Activated B cell treated with CpG ODN at 0.5 μM for 24 hours (primary cell): ENCODE measurements at regions of chr15 and their contacts with region 1.

Region 1: GRCh38 chr15:70488002-70488605 is 275.3 kb downstream of the UACA start:
- DNase-seq: peak; percentile 68
- ATAC-seq: no peak
- H3K4me3 Mint-ChIP-seq: no peak overlapping the region
- H3K27ac Mint-ChIP-seq: peak overlapping the region; percentile 35
- H3K4me1 Mint-ChIP-seq: peaks cover 60% of the 10 kb centered on the region
- H3K27me3 Mint-ChIP-seq: no peaks in the 10 kb centered on the region
- CTCF ChIP-seq: peak; percentile 95

Region 2: DNA sequence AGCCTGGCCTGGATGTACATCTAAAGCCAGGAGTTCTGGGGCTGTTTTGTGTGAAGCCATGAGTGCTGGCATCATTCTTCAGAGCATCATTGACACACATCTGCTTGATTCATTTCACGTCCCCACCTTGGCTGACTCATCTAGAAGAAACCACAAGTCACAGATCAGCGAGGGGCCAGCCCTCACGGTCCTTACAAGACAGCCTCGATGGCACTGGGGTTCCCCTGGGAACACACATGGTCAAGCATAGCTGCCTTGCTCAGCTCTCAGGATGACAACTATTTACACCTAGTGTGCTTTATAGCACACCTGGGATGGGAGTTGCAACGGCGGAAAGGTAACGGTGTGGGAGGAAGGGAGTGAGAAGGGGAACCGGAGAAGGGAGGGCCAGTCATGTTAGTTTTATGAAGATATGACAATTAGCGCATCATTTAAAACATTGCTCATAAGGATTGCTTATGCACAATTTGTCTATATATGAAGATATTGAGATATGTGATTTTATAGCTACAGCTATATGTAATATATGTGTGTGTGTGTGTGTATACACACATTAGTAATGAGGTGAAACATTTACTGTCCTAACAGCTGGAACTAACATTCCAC is 808.4 kb before region 1 on chr15:
- CTCF ChIA-PET with region 1: no interaction called
- POLR2A ChIA-PET with region 1: no interaction called
- intact Hi-C with region 1: loop called (anchors 1 kb)
- DNase-seq: peak; percentile 44
- ATAC-seq: peak; percentile 93
- H3K4me3 Mint-ChIP-seq: no peak overlapping the region
- H3K27ac Mint-ChIP-seq: peak overlapping the region; percentile 68
- H3K4me1 Mint-ChIP-seq: peaks cover 25% of the 10 kb centered on the region
- H3K27me3 Mint-ChIP-seq: peaks cover 23% of the 10 kb centered on the region
- CTCF ChIP-seq: no peak

Region 3: DNA sequence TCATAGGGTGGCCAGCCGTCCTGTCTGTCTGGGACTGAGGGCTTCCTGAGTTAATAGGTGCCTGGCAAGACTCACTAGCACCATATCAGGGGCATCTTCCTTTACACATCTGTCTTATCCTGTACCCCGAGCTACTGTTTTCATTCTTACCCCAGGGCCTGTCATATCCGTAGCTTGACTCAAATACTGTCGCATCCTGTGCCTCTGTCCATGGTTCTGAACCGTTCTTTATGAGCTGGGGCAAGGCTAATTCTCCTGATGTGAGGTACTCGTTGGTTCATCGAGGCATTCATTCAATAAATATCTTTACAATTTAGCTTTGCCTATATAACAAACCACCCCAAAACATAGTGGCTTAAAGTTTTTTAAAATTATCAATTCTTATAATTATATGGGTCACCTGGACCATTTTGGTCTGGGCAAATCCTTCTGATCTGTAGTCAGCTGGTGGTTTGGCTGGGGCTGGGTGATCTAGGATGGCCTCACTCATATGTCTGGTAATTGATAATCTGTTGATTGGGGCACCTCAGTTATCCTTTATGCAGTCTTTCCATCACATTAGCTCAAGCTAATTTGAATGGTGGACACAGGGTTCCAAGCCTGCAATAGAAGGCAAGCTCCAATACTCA is 511.6 kb before region 1 on chr15:
- CTCF ChIA-PET with region 1: interaction called, 3 read pairs
- POLR2A ChIA-PET with region 1: interaction called, 3 read pairs
- intact Hi-C with region 1: loop called (anchors 1 kb)
- DNase-seq: no peak
- ATAC-seq: no peak
- H3K4me3 Mint-ChIP-seq: no peak overlapping the region
- H3K27ac Mint-ChIP-seq: peak overlapping the region; percentile 25
- H3K4me1 Mint-ChIP-seq: peaks cover 28% of the 10 kb centered on the region
- H3K27me3 Mint-ChIP-seq: peaks cover 33% of the 10 kb centered on the region
- CTCF ChIP-seq: no peak

Region 4: GRCh38 chr15:70271422-70272088 is 216.5 kb before region 1 on chr15:
- CTCF ChIA-PET with region 1: interaction called, 3 read pairs
- POLR2A ChIA-PET with region 1: interaction called, 6 read pairs
- intact Hi-C with region 1: loop called (anchors 2 kb)
- DNase-seq: no peak
- ATAC-seq: no peak
- H3K4me3 Mint-ChIP-seq: no peak overlapping the region
- H3K27ac Mint-ChIP-seq: no peak overlapping the region
- H3K4me1 Mint-ChIP-seq: peaks cover 57% of the 10 kb centered on the region
- H3K27me3 Mint-ChIP-seq: peaks cover 3% of the 10 kb centered on the region
- CTCF ChIP-seq: no peak

Region 5: DNA sequence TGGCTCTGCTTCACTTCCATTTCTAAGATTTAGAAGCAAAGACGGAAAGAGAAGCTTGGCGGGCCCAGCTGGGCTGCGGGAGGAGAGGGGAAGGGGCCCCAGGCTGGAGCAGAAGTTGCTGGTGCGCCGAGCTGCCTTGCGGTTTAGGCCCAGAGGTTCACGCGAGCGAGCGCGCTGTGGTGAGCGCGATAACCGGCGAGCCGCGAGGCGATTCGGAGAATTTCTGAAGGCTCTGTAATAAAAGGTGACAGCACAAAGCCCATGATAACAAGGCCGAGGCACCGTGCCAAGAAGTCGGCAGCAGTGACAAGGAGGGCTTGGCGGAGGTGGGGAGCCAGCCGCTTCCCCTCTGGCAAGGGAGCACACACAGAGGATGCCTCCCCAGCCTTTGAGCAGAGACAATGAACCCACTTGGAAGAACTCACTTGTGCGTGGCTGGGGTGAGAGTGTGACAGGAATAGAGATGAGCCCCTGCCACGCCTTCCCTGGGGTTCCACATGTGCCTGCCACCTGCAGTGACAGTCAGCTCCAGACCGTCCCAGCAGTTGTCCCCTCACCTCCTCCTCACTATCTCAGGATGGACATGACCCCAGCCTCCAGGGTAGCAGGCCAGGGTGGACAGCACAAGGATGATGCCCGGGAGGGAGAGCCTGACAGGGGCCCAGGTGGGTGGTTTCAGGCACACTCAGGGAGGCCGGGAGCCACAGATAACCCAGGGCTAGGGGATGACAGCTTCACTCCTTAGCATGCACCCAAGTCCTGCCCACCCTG is 40.0 kb before region 1 on chr15:
- CTCF ChIA-PET with region 1: no interaction called
- POLR2A ChIA-PET with region 1: no interaction called
- intact Hi-C with region 1: no loop called
- DNase-seq: no peak
- ATAC-seq: peak; percentile 84
- H3K4me3 Mint-ChIP-seq: peak overlapping the region; percentile 52
- H3K27ac Mint-ChIP-seq: no peak overlapping the region
- H3K4me1 Mint-ChIP-seq: peaks cover 21% of the 10 kb centered on the region
- H3K27me3 Mint-ChIP-seq: peaks cover 13% of the 10 kb centered on the region
- CTCF ChIP-seq: no peak

Region 6: DNA sequence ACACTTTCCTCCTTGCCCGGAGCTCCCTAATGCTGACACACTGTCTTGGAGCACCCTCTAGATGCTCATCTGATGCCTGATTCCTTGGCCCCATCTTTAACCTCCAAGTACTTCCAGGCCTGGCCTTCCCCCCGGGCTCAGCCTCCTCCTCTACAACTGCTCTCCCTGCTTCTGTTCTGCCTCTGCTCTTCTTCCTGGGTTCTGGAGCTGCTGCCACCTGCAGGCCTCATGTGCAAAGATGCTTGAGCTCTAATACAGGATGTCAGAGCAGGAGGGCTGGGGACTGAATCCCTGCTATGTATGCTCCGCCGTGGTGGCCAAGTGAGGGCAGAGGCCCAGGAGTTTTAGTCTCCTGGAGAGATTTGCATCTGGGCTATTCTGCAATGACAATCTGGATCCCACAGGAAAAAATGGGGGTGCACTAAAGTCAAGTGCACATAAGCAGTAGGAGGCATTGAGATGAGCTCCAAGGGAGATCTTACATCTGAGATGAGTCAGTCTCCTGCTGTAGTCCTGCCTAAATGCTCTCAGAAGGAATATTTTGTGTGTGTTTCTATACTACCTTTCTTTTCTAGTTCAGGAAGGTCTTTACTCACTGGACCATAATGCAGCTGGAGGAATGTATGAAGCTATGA is 21.1 kb before region 1 on chr15:
- CTCF ChIA-PET with region 1: interaction called, 14 read pairs
- POLR2A ChIA-PET with region 1: interaction called, 8 read pairs
- intact Hi-C with region 1: loop called (anchors 1 kb)
- DNase-seq: no peak
- ATAC-seq: peak; percentile 73
- H3K4me3 Mint-ChIP-seq: no peak overlapping the region
- H3K27ac Mint-ChIP-seq: no peak overlapping the region
- H3K4me1 Mint-ChIP-seq: peaks cover 20% of the 10 kb centered on the region
- H3K27me3 Mint-ChIP-seq: peaks cover 3% of the 10 kb centered on the region
- CTCF ChIP-seq: peak; percentile 72

Region 7: DNA sequence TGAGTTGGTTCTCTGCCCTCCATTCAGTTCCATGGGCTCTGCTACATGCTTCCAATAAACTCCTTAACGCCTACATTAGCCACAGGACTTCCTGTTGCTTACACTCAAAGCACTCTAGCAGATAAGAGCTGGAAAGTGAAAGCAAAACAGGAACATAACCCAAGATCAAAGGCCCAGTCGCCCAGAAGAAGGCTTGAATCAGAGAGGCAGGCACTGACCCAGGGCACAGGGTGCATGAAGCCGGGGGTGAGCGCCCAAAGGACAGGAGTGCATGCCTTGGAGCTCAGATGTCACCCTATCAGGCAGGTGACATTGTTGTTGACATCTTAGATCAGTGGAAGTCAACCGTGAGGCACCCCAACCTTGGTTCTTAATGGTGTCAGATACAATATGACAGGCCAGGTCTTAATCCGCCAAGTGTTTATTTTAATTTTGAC is 40.2 kb after region 1 on chr15:
- CTCF ChIA-PET with region 1: interaction called, 3 read pairs
- POLR2A ChIA-PET with region 1: interaction called, 5 read pairs
- intact Hi-C with region 1: loop called (anchors 1 kb)
- DNase-seq: peak; percentile 30
- ATAC-seq: peak; percentile 72
- H3K4me3 Mint-ChIP-seq: peak overlapping the region; percentile 47
- H3K27ac Mint-ChIP-seq: peak overlapping the region; percentile 85
- H3K4me1 Mint-ChIP-seq: peaks cover 48% of the 10 kb centered on the region
- H3K27me3 Mint-ChIP-seq: no peaks in the 10 kb centered on the region
- CTCF ChIP-seq: no peak